Endothelial cell of umbilical vein (primary cell): ENCODE measurements at regions of chr14 and their contacts with region 1.

Region 1: DNA sequence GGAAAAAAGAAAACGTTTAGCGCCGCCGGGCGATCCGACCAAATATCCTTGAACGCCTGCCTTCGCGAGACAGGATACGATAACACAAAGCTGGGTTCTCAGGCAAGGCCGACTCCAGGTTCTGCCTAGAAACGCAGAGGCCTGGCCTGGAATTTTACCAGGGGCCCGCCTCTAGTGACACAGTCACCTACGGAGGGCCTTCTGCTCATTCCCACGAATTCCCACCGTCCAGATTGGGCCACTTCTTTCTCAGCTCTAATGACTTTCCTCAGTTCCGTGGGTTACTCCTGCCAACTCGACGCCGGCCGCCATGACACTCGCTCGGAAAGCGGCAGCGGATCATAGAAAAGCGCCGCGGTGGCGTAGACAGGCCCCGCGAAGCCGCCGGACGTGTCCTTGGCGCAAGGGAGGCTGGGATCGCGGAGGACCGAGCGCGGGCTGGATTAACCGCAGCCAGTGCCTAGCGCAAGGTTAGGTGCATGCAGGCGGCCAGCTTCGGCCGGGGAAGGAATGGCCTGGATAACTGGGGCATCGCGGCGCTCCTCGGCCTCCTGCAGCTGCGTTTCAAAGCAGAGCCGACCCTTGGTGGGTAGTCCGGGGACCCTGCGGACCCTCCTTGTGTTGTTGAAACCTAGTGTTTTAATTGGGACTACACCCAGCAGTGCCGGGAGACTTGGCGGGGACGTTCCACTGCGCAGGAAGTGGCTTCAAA is at the start of gene TRIP11:
- DNase-seq: peak; percentile 94
- H3K4me3 ChIP-seq: peak within 1 kb of the TSS; percentile 67 to 96 (median 73)
- H3K27ac ChIP-seq: peak within 1 kb of the TSS; percentile 92
- H3K4me1 ChIP-seq: peaks cover 16% of the 10 kb centered on the region
- H3K27me3 ChIP-seq: no peaks in the 10 kb centered on the region
- CTCF ChIP-seq: no peak
- POLR2A ChIP-seq: peak; percentile 91
- total RNA-seq, gene TRIP11: 51.7 and 58.0 TPM in 2 replicates

Region 2: GRCh38 chr14:92026548-92027190 is 13.2 kb before region 1 on chr14:
- CTCF ChIA-PET with region 1: interaction called, 4 read pairs
- POLR2A ChIA-PET with region 1: no interaction called
- dilution Hi-C with region 1: no loop called
- intact Hi-C with region 1: loop called (anchors 1 kb)
- DNase-seq: no peak
- H3K4me3 ChIP-seq: no peak overlapping the region
- H3K27ac ChIP-seq: no peak overlapping the region
- H3K4me1 ChIP-seq: no peaks in the 10 kb centered on the region
- H3K27me3 ChIP-seq: no peaks in the 10 kb centered on the region
- CTCF ChIP-seq: no peak
- POLR2A ChIP-seq: no peak

Region 3: GRCh38 chr14:92121670-92122350 is 81.9 kb after region 1 on chr14 and contains the starts of genes CPSF2 and NDUFB1:
- CTCF ChIA-PET with region 1: interaction called, 3 read pairs
- POLR2A ChIA-PET with region 1: interaction called, 5 read pairs
- dilution Hi-C with region 1: no loop called
- intact Hi-C with region 1: loop called (anchors 1 kb)
- DNase-seq: peak; percentile 84
- H3K4me3 ChIP-seq: peak within 1 kb of the TSS; percentile 40 to 89 (median 79)
- H3K27ac ChIP-seq: peak within 1 kb of the TSS; percentile 75
- H3K4me1 ChIP-seq: peaks cover 7% of the 10 kb centered on the region
- H3K27me3 ChIP-seq: no peaks in the 10 kb centered on the region
- CTCF ChIP-seq: no peak
- POLR2A ChIP-seq: peak; percentile 95
- total RNA-seq, gene CPSF2: 76.9 and 81.7 TPM in 2 replicates
- total RNA-seq, gene NDUFB1: 95.2 and 114 TPM in 2 replicates